CD4-positive, alpha-beta T cell (primary cell): ENCODE measurements at regions of chr6 and their contacts with region 1.

Region 1: GRCh38 chr6:131281471-131282270 is 146.4 kb downstream of the AKAP7 start:
- DNase-seq: peak; percentile 54 to 90 (median 75)
- ATAC-seq: peak; percentile 97
- H3K4me3 ChIP-seq: peak overlapping the region; percentile 29
- H3K4me3 Mint-ChIP-seq: peak overlapping the region; percentile 76
- H3K27ac ChIP-seq: peak overlapping the region; percentile 73 to 80
- H3K27ac Mint-ChIP-seq: peak overlapping the region; percentile 96
- H3K4me1 ChIP-seq: peaks cover 24% of the 10 kb centered on the region
- H3K4me1 Mint-ChIP-seq: peaks cover 88% of the 10 kb centered on the region
- H3K27me3 ChIP-seq: no peaks in the 10 kb centered on the region
- H3K27me3 Mint-ChIP-seq: no peaks in the 10 kb centered on the region
- CTCF ChIP-seq: no peak

Region 2: GRCh38 chr6:131199568-131200272 is 82.0 kb before region 1 on chr6:
- CTCF ChIA-PET with region 1: interaction called, 23 read pairs
- POLR2A ChIA-PET with region 1: interaction called, 91 read pairs
- intact Hi-C with region 1: loop called in 1 of 2 experiments (anchors 1 kb)
- DNase-seq: peak; percentile 58 to 95 (median 68)
- ATAC-seq: peak; percentile 92
- H3K4me3 ChIP-seq: peak overlapping the region; percentile 43
- H3K4me3 Mint-ChIP-seq: peak overlapping the region; percentile 84
- H3K27ac ChIP-seq: peak overlapping the region; percentile 72 to 80
- H3K27ac Mint-ChIP-seq: peak overlapping the region; percentile 98
- H3K4me1 ChIP-seq: peaks cover 40% of the 10 kb centered on the region
- H3K4me1 Mint-ChIP-seq: peaks cover 68% of the 10 kb centered on the region
- H3K27me3 ChIP-seq: no peaks in the 10 kb centered on the region
- H3K27me3 Mint-ChIP-seq: no peaks in the 10 kb centered on the region
- CTCF ChIP-seq: peak; percentile 76

Region 3: GRCh38 chr6:131205481-131206244 is 76.0 kb before region 1 on chr6:
- CTCF ChIA-PET with region 1: no interaction called
- POLR2A ChIA-PET with region 1: interaction called, 91 read pairs
- intact Hi-C with region 1: loop called in 1 of 2 experiments (anchors 5 kb)
- DNase-seq: peak in 3 of 14 experiments; percentile 9 to 19 (median 11)
- ATAC-seq: peak; percentile 37
- H3K4me3 ChIP-seq: no peak overlapping the region
- H3K4me3 Mint-ChIP-seq: peak overlapping the region; percentile 39
- H3K27ac ChIP-seq: no peak overlapping the region
- H3K27ac Mint-ChIP-seq: peak overlapping the region; percentile 72
- H3K4me1 ChIP-seq: peaks cover 20% of the 10 kb centered on the region
- H3K4me1 Mint-ChIP-seq: peaks cover 65% of the 10 kb centered on the region
- H3K27me3 ChIP-seq: no peaks in the 10 kb centered on the region
- H3K27me3 Mint-ChIP-seq: no peaks in the 10 kb centered on the region
- CTCF ChIP-seq: peak; percentile 39

Region 4: GRCh38 chr6:131213501-131213990 is 68.1 kb before region 1 on chr6:
- CTCF ChIA-PET with region 1: no interaction called
- POLR2A ChIA-PET with region 1: interaction called, 15 read pairs
- intact Hi-C with region 1: loop called in 1 of 2 experiments (anchors 5 kb)
- DNase-seq: peak in 1 of 14 experiments; percentile 20
- ATAC-seq: no peak
- H3K4me3 ChIP-seq: no peak overlapping the region
- H3K4me3 Mint-ChIP-seq: peak overlapping the region; percentile 52
- H3K27ac ChIP-seq: no peak overlapping the region
- H3K27ac Mint-ChIP-seq: peak overlapping the region; percentile 63
- H3K4me1 ChIP-seq: peaks cover 15% of the 10 kb centered on the region
- H3K4me1 Mint-ChIP-seq: peaks cover 64% of the 10 kb centered on the region
- H3K27me3 ChIP-seq: no peaks in the 10 kb centered on the region
- H3K27me3 Mint-ChIP-seq: no peaks in the 10 kb centered on the region
- CTCF ChIP-seq: no peak

Region 5: GRCh38 chr6:131244942-131245341 is 36.7 kb before region 1 on chr6:
- CTCF ChIA-PET with region 1: no interaction called
- POLR2A ChIA-PET with region 1: interaction called, 19 read pairs
- intact Hi-C with region 1: loop called in 1 of 2 experiments (anchors 5 kb)
- DNase-seq: peak in 1 of 14 experiments; percentile 28
- ATAC-seq: peak; percentile 26
- H3K4me3 ChIP-seq: no peak overlapping the region
- H3K4me3 Mint-ChIP-seq: no peak overlapping the region
- H3K27ac ChIP-seq: no peak overlapping the region
- H3K27ac Mint-ChIP-seq: peak overlapping the region; percentile 8
- H3K4me1 ChIP-seq: no peaks in the 10 kb centered on the region
- H3K4me1 Mint-ChIP-seq: peaks cover 49% of the 10 kb centered on the region
- H3K27me3 ChIP-seq: no peaks in the 10 kb centered on the region
- H3K27me3 Mint-ChIP-seq: no peaks in the 10 kb centered on the region
- CTCF ChIP-seq: no peak

Region 6: DNA sequence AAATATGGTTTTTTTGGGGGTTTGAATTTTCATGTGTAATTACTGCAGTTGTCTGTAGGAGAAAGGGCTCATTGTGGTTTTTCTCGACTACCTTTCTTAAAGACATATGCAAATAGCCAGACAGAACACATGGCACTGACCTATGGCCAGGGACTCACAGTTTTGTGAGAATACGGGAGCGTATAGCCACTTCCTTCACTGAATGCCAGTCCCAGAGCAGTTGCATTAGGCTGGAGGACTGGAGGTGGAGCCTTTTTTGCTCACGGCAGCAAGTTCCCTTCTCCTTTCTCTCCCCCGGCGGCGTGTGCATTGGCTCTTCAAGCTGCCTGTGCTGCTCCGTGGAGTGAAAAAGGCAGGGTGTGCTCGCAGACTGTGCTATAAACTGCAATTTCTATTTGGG is 31.5 kb before region 1 on chr6:
- CTCF ChIA-PET with region 1: no interaction called
- POLR2A ChIA-PET with region 1: interaction called, 19 read pairs
- intact Hi-C with region 1: loop called in 1 of 2 experiments (anchors 5 kb)
- DNase-seq: peak in 8 of 14 experiments; percentile 8 to 53 (median 28)
- ATAC-seq: peak; percentile 90
- H3K4me3 ChIP-seq: peak overlapping the region; percentile 23
- H3K4me3 Mint-ChIP-seq: peak overlapping the region; percentile 76
- H3K27ac ChIP-seq: no peak overlapping the region
- H3K27ac Mint-ChIP-seq: peak overlapping the region; percentile 43
- H3K4me1 ChIP-seq: no peaks in the 10 kb centered on the region
- H3K4me1 Mint-ChIP-seq: peaks cover 66% of the 10 kb centered on the region
- H3K27me3 ChIP-seq: no peaks in the 10 kb centered on the region
- H3K27me3 Mint-ChIP-seq: no peaks in the 10 kb centered on the region
- CTCF ChIP-seq: no peak

Region 7: DNA sequence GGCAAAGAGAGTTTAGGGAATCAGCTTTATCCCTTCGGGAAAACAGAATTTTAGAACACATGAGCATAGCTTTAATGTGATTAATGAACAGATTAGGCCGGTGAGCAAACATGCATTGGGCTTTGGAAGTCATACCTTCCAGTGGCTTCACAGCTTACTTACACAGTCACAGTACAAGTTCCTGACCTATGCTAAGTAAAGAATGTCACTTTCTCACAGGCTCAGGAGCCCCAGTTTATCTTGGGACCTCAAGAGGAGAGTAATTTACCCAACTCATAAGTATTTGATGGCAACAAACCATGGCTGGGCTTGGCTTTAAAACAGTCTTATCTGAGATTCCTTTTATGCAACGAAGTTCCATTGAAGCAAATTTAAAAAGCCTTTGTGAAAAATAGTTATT is 49.5 kb after region 1 on chr6:
- CTCF ChIA-PET with region 1: no interaction called
- POLR2A ChIA-PET with region 1: no interaction called
- intact Hi-C with region 1: loop called in 1 of 2 experiments (anchors 5 kb)
- DNase-seq: no peak
- ATAC-seq: no peak
- H3K4me3 ChIP-seq: no peak overlapping the region
- H3K4me3 Mint-ChIP-seq: no peak overlapping the region
- H3K27ac ChIP-seq: no peak overlapping the region
- H3K27ac Mint-ChIP-seq: no peak overlapping the region
- H3K4me1 ChIP-seq: no peaks in the 10 kb centered on the region
- H3K4me1 Mint-ChIP-seq: no peaks in the 10 kb centered on the region
- H3K27me3 ChIP-seq: no peaks in the 10 kb centered on the region
- H3K27me3 Mint-ChIP-seq: no peaks in the 10 kb centered on the region
- CTCF ChIP-seq: no peak